Mammary epithelial cell (primary cell): ENCODE measurements at regions of chr3 and their contacts with region 1.

Region 1: DNA sequence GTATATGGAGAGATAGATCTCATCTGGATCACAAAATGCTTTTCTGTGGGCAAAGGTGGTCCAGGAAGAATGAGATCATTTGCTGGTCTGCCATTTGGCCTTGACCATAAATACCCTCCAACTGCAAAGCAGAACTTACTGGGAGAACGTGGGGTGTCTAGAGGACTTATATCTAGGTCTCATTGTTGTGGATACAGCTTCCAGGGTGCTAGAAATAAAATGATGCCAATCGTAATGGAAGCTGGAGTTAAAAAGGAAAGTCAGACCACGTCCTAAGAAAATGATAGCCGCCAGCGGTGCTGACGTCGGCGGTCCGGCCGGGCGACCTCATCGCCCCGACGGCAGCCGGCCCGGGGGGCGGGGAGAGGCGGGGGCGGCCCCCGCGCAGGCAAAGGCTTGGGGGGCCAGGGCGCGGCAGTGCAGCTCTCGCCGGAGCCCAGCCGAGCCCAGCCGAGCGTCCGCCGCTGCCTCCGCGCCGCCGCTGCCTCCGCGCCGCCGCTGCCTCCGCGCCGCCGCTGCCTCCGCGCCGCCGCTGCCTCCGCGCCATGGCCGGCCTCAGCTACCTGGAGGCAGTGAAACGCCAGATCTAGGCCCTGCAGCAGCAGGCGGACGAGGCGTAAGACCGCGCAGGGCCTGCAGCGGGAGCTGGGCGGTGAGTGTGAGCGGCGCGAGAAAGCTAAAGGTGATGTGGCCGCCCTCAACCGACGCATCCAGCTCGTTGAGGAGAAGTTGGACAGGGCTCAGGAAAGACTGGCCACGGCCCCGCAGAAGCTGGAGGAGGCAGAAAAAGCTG is 89.5 kb downstream of the EOMES start:
- DNase-seq: peak; percentile 60
- H3K4me3 ChIP-seq: peak overlapping the region in 2 of 3 experiments; percentile 38 to 46
- H3K27ac ChIP-seq: no peak overlapping the region
- H3K4me1 ChIP-seq: no peaks in the 10 kb centered on the region
- H3K27me3 ChIP-seq: no peaks in the 10 kb centered on the region
- CTCF ChIP-seq: no peak

Region 2: GRCh38 chr3:27484015-27484844 is 148.4 kb before region 1 on chr3 and contains the start of gene SLC4A7:
- CTCF ChIA-PET with region 1: no interaction called
- dilution Hi-C with region 1: no loop called
- in situ Hi-C with region 1: no loop called
- intact Hi-C with region 1: loop called (anchors 2 kb)
- DNase-seq: peak; percentile 96
- H3K4me3 ChIP-seq: peak within 1 kb of the TSS; percentile 71 to 93 (median 92)
- H3K27ac ChIP-seq: peak within 1 kb of the TSS; percentile 67
- H3K4me1 ChIP-seq: peaks cover 13% of the 10 kb centered on the region
- H3K27me3 ChIP-seq: no peaks in the 10 kb centered on the region
- CTCF ChIP-seq: no peak
- total RNA-seq, gene SLC4A7: 95.4 to 123 TPM

Region 3: DNA sequence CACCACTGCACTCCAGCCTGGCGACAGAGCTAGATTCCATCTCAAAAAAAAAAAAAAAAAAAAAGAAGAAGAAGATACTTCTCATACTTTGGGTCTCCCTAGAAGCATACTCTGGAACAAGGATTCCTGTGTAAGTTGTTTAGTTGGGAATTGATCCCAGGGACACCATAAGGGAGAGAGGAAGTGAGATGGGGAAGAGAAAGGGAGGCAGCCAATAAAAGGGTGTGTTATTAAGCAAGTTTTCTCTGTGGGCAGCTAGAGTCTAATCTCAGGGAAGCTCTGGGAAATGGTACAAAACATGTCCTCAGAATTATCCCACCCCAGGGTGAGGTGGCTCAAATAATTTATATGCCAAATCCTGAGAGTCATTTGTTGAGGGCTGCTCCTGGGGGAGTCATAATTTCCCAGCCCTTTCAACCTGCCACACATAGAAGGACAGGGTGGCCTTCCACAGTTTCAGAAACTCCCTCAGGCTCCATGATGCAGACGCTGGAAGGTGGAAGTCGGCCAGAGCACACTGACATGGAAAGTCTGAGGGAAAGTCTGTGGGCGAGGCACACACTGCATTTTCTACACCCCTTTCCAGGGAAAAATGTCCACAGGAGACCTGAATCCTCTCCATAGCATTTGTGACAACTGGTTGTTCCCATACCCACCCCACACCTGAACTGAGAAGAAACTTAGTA is 62.1 kb before region 1 on chr3:
- CTCF ChIA-PET with region 1: no interaction called
- dilution Hi-C with region 1: no loop called
- in situ Hi-C with region 1: no loop called
- intact Hi-C with region 1: no loop called
- DNase-seq: no peak
- H3K4me3 ChIP-seq: no peak overlapping the region
- H3K27ac ChIP-seq: no peak overlapping the region
- H3K4me1 ChIP-seq: peaks cover 19% of the 10 kb centered on the region
- H3K27me3 ChIP-seq: no peaks in the 10 kb centered on the region
- CTCF ChIP-seq: no peak

Region 4: GRCh38 chr3:27590437-27591298 is 42.0 kb before region 1 on chr3:
- CTCF ChIA-PET with region 1: interaction called, 10 read pairs
- dilution Hi-C with region 1: no loop called
- in situ Hi-C with region 1: no loop called
- intact Hi-C with region 1: no loop called
- DNase-seq: peak; percentile 41
- H3K4me3 ChIP-seq: no peak overlapping the region
- H3K27ac ChIP-seq: peak overlapping the region; percentile 5
- H3K4me1 ChIP-seq: peaks cover 23% of the 10 kb centered on the region
- H3K27me3 ChIP-seq: no peaks in the 10 kb centered on the region
- CTCF ChIP-seq: no peak

Region 5: GRCh38 chr3:27607370-27607769 is 25.3 kb before region 1 on chr3:
- CTCF ChIA-PET with region 1: no interaction called
- dilution Hi-C with region 1: no loop called
- in situ Hi-C with region 1: no loop called
- intact Hi-C with region 1: loop called (anchors 2 kb)
- DNase-seq: peak; percentile 57
- H3K4me3 ChIP-seq: no peak overlapping the region
- H3K27ac ChIP-seq: no peak overlapping the region
- H3K4me1 ChIP-seq: peaks cover 15% of the 10 kb centered on the region
- H3K27me3 ChIP-seq: no peaks in the 10 kb centered on the region
- CTCF ChIP-seq: no peak